Activated naive CD4-positive, alpha-beta T cell treated with anti-CD3 and anti-CD28 coated beads, Interleukin-2, amount 10 ng/mL, durations not matched to agents 7 days and 5 days (primary cell): ENCODE measurements at regions of chr6 and their contacts with region 1.

Region 1: GRCh38 chr6:118697554-118697953 is 46.2 kb upstream of the CEP85L start:
- DNase-seq: no peak
- H3K4me3 Mint-ChIP-seq: no peak overlapping the region
- H3K27ac Mint-ChIP-seq: no peak overlapping the region
- H3K4me1 Mint-ChIP-seq: peaks cover 21% of the 10 kb centered on the region
- H3K27me3 Mint-ChIP-seq: no peaks in the 10 kb centered on the region

Region 2: DNA sequence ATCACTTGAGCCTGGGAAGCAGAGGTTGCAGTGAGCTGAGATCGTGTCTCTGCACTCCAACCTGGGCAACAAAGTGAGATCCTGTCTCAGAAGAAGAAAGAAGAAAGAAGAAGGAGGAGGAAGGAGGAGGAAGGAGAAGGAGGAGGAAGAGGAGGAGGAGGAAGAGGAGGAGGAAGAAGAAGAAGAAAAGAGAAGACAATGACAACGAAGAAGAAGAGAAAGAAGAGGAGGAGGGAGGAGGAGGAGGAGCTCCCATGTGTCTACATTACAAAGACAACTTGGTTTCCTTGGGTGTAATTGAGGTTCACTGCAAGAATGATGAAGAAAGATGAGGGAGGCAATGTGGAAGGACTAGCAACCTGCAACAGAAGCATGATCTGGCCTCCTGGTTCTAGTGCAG is 24.9 kb before region 1 on chr6:
- CTCF ChIA-PET with region 1: no interaction called
- DNase-seq: no peak
- H3K4me3 Mint-ChIP-seq: no peak overlapping the region
- H3K27ac Mint-ChIP-seq: no peak overlapping the region
- H3K4me1 Mint-ChIP-seq: peaks cover 20% of the 10 kb centered on the region
- H3K27me3 Mint-ChIP-seq: no peaks in the 10 kb centered on the region

Region 3: DNA sequence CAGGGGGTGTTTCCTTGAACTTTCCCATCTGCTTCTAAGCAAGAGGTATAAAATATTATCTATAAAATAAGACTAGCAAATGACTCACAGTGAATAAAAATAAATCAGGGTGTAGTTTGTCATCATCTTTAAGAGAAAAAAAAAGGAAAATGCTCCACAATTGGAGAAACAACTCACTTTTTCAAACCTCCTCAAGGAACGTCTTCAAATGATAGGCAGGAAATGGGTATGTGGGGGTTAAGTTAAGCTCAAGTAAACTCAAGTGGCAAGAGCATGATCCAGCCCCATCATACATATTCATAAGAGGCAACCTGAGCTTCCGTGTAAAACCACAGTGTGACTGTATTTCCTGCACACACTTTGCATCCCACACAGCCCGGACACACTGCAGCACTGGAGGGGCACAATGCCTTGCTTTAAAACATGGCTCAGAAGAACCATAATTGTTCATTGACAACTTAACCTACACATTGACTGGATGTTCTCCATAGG is 12.4 kb after region 1 on chr6:
- CTCF ChIA-PET with region 1: interaction called, 10 read pairs
- DNase-seq: peak; percentile 84
- H3K4me3 Mint-ChIP-seq: peak overlapping the region; percentile 96
- H3K27ac Mint-ChIP-seq: peak overlapping the region; percentile 97
- H3K4me1 Mint-ChIP-seq: peaks cover 67% of the 10 kb centered on the region
- H3K27me3 Mint-ChIP-seq: no peaks in the 10 kb centered on the region